Panc1 (cell line): ENCODE measurements at regions of chr16 and their contacts with region 1.

Region 1: GRCh38 chr16:51125992-51126391 is 25.1 kb downstream of the SALL1 start:
- DNase-seq: no peak
- ATAC-seq: no peak
- H3K4me3 ChIP-seq: no peak overlapping the region
- H3K27ac ChIP-seq: no peak overlapping the region
- H3K4me1 ChIP-seq: no peaks in the 10 kb centered on the region
- H3K27me3 ChIP-seq: no peaks in the 10 kb centered on the region
- CTCF ChIP-seq: no peak

Region 2: DNA sequence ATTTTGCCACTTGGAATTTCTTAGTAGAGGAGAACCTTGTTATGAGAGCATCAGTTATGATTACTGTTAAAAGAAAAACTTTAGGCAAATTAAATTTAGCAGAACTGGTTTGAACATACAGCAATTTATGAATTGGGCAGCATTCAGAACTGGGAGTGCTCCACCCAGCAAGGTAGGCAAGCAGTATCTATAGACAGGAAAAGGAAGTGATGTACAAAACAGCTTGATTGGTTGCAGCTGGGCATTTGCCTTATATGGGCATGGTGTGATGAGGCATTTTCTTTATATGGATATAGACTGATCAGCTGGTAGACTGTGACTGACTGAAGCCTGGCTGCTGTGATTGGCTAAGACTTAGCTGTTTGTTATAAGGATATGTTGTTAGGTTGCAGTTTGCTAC is 401.7 kb before region 1 on chr16:
- CTCF ChIA-PET with region 1: no interaction called
- POLR2A ChIA-PET with region 1: no interaction called
- in situ Hi-C with region 1: no loop called
- intact Hi-C with region 1: no loop called
- DNase-seq: no peak
- ATAC-seq: no peak
- H3K4me3 ChIP-seq: no peak overlapping the region
- H3K27ac ChIP-seq: no peak overlapping the region
- H3K4me1 ChIP-seq: no peaks in the 10 kb centered on the region
- H3K27me3 ChIP-seq: no peaks in the 10 kb centered on the region
- CTCF ChIP-seq: no peak

Region 3: DNA sequence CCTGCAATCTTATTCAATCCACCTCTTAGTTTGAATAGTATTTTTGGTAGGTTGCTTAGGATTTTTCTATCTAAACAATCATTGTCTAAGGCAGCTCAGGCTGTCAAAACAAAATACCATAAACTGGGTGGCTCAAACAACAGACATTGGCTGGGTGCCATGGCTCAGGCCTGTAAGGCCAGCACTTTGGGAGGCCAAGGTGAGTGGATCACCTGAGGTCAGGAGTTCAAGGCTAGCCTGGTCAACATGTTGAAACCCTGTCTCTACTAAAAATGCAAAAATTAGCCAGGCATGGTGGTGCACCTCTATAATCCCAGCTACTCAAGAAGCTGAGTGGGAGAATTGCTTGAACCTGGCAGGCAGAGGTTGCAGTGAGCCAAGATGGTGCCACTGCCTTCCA is 257.4 kb before region 1 on chr16:
- CTCF ChIA-PET with region 1: no interaction called
- POLR2A ChIA-PET with region 1: no interaction called
- in situ Hi-C with region 1: no loop called
- intact Hi-C with region 1: no loop called
- DNase-seq: no peak
- ATAC-seq: no peak
- H3K4me3 ChIP-seq: no peak overlapping the region
- H3K27ac ChIP-seq: no peak overlapping the region
- H3K4me1 ChIP-seq: no peaks in the 10 kb centered on the region
- H3K27me3 ChIP-seq: no peaks in the 10 kb centered on the region
- CTCF ChIP-seq: no peak

Region 4: GRCh38 chr16:51163894-51164566 is 38.0 kb after region 1 on chr16:
- CTCF ChIA-PET with region 1: no interaction called
- POLR2A ChIA-PET with region 1: no interaction called
- in situ Hi-C with region 1: no loop called
- intact Hi-C with region 1: no loop called
- DNase-seq: no peak
- ATAC-seq: no peak
- H3K4me3 ChIP-seq: no peak overlapping the region
- H3K27ac ChIP-seq: no peak overlapping the region
- H3K4me1 ChIP-seq: no peaks in the 10 kb centered on the region
- H3K27me3 ChIP-seq: no peaks in the 10 kb centered on the region
- CTCF ChIP-seq: no peak

Region 5: GRCh38 chr16:51813609-51814008 is 687.6 kb after region 1 on chr16:
- CTCF ChIA-PET with region 1: no interaction called
- POLR2A ChIA-PET with region 1: interaction called, 10 read pairs
- in situ Hi-C with region 1: no loop called
- intact Hi-C with region 1: no loop called
- DNase-seq: no peak
- ATAC-seq: no peak
- H3K4me3 ChIP-seq: no peak overlapping the region
- H3K27ac ChIP-seq: no peak overlapping the region
- H3K4me1 ChIP-seq: no peaks in the 10 kb centered on the region
- H3K27me3 ChIP-seq: no peaks in the 10 kb centered on the region
- CTCF ChIP-seq: peak; percentile 26; the same call in 1 of the 2 replicates